B cell (primary cell): ENCODE measurements at regions of chr7 and their contacts with region 1.

Region 1: GRCh38 chr7:35537067-35538023 is 157.6 kb downstream of the HERPUD2 start:
- DNase-seq: peak; percentile 86
- ATAC-seq: peak; percentile 99
- H3K4me3 ChIP-seq: peak overlapping the region in 4 of 5 experiments; percentile 9 to 56 (median 34)
- H3K4me3 Mint-ChIP-seq: peak overlapping the region; percentile 91
- H3K27ac ChIP-seq: no peak overlapping the region
- H3K27ac Mint-ChIP-seq: peak overlapping the region; percentile 56
- H3K4me1 ChIP-seq: peaks cover 0 to 4% of the 10 kb centered on the region in 2 donors
- H3K4me1 Mint-ChIP-seq: peaks cover 8% of the 10 kb centered on the region
- H3K27me3 ChIP-seq: peaks cover 0 to 13% (median 2%) of the 10 kb centered on the region in 4 experiments
- H3K27me3 Mint-ChIP-seq: peaks cover 34% of the 10 kb centered on the region
- CTCF ChIP-seq: peak; percentile 97

Region 2: DNA sequence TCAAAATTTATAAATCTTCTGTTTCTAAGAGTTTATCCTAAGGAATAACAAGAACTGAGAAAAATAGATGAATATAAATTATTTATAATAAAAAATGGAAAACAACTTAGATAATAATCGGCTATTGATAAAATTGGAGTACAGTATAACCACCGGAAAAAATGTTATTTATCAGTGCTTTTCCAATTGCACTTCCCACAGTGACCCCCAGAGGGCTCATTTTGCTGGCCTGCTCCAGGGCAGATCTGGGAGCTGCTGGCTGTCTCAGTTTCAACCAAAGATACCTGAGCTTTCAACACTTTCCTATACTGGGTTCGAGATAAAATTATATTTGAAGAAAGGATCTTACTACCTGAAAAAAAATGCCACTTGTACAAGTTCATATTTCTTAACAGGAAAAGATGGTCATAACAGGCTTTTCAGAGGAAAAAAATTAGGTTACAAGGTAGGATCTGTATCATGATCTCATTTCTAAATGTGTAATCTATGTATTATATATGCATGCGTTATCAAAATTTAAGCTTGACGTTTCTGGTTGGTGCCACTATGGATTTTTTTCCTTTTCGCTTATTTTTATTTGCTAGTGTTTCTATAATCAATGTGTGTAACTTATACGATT is 713.6 kb before region 1 on chr7:
- CTCF ChIA-PET with region 1: interaction called, 3 read pairs
- POLR2A ChIA-PET with region 1: no interaction called
- intact Hi-C with region 1: loop called (anchors 2 kb)
- DNase-seq: peak; percentile 34
- ATAC-seq: no peak
- H3K4me3 ChIP-seq: no peak overlapping the region
- H3K4me3 Mint-ChIP-seq: no peak overlapping the region
- H3K27ac ChIP-seq: no peak overlapping the region
- H3K27ac Mint-ChIP-seq: no peak overlapping the region
- H3K4me1 ChIP-seq: no peaks in the 10 kb centered on the region
- H3K4me1 Mint-ChIP-seq: no peaks in the 10 kb centered on the region
- H3K27me3 ChIP-seq: no peaks in the 10 kb centered on the region
- H3K27me3 Mint-ChIP-seq: peaks cover 3% of the 10 kb centered on the region
- CTCF ChIP-seq: peak; percentile 90

Region 3: GRCh38 chr7:35424869-35425495 is 112.4 kb before region 1 on chr7:
- CTCF ChIA-PET with region 1: interaction called, 18 read pairs
- POLR2A ChIA-PET with region 1: no interaction called
- intact Hi-C with region 1: loop called (anchors 1 kb)
- DNase-seq: peak; percentile 65
- ATAC-seq: peak; percentile 73
- H3K4me3 ChIP-seq: no peak overlapping the region
- H3K4me3 Mint-ChIP-seq: no peak overlapping the region
- H3K27ac ChIP-seq: no peak overlapping the region
- H3K27ac Mint-ChIP-seq: no peak overlapping the region
- H3K4me1 ChIP-seq: no peaks in the 10 kb centered on the region
- H3K4me1 Mint-ChIP-seq: no peaks in the 10 kb centered on the region
- H3K27me3 ChIP-seq: peaks cover 0 to 9% (median 0%) of the 10 kb centered on the region in 4 experiments
- H3K27me3 Mint-ChIP-seq: peaks cover 22% of the 10 kb centered on the region
- CTCF ChIP-seq: peak; percentile 84

Region 4: DNA sequence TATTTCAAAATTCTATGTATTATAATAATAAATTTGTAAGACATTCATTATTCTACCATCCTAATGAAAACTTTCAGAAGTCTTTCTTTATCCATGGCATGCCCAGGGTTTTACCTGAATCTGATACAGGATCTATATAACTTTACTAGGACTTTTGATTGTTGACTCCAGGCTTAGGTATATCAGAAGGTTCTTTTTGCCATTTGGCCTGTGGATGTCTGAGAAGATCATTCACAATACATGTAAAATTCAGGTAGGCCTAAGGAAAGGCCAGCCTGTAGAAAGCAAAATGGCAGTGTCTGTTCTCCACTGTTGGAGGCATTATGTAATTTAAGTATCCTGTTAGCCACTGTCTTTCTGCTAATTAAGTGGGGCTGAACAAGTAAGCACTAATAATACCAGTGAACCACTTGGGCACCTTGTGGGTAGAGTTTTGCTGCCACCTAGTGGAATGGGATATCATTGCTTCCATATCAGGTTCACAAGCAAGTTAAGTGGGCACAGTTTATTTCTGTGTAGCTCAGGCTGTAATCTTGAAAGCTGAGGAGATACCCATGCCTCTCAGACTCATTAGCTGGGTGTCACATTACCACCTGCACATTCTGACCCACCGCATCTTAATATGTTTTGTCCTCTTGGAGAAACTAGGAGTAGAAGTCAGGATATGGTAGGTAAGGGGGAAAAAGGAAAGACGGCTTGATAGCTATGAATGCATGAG is 369.0 kb after region 1 on chr7:
- CTCF ChIA-PET with region 1: interaction called, 7 read pairs
- POLR2A ChIA-PET with region 1: no interaction called
- intact Hi-C with region 1: loop called (anchors 1 kb)
- DNase-seq: peak; percentile 85
- ATAC-seq: peak; percentile 95
- H3K4me3 ChIP-seq: no peak overlapping the region
- H3K4me3 Mint-ChIP-seq: no peak overlapping the region
- H3K27ac ChIP-seq: peak overlapping the region in 1 of 2 donors; percentile 55
- H3K27ac Mint-ChIP-seq: peak overlapping the region; percentile 73
- H3K4me1 ChIP-seq: peaks cover 0 to 2% of the 10 kb centered on the region in 2 donors
- H3K4me1 Mint-ChIP-seq: peaks cover 5% of the 10 kb centered on the region
- H3K27me3 ChIP-seq: no peaks in the 10 kb centered on the region
- H3K27me3 Mint-ChIP-seq: no peaks in the 10 kb centered on the region
- CTCF ChIP-seq: peak; percentile 96